ENCODE measurements at regions of chr6 and their contacts with region 1.

Region 1: DNA sequence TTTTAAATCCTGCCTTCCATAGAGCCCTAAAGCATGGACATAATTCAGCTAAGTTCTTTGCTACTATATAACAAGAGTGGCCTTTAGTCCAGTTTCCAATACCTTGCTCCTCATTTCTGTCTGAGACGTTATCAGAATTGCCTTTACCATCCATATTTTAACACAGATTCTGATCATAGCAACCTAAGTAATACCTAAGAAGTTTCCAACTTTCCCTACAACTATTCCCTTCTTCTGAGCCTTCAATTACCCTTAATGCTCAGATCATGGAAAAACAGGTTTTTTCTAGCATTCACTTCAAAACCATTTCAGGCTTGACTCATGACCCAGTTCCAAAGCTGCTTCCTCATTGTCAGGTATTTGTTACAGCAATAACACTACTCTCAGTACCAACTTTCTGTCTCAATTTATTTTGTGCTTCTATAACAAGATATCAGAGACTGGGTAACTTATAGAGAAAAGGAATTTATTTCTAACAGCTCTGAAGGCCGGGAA is 367.1 kb downstream of the C6orf118 start:
- DNase-seq: no peak
- H3K4me3 ChIP-seq: no peak overlapping the region
- H3K27ac ChIP-seq: no peak overlapping the region
- H3K27me3 ChIP-seq: no peaks in the 10 kb centered on the region
- CTCF ChIP-seq: no peak

Region 2: DNA sequence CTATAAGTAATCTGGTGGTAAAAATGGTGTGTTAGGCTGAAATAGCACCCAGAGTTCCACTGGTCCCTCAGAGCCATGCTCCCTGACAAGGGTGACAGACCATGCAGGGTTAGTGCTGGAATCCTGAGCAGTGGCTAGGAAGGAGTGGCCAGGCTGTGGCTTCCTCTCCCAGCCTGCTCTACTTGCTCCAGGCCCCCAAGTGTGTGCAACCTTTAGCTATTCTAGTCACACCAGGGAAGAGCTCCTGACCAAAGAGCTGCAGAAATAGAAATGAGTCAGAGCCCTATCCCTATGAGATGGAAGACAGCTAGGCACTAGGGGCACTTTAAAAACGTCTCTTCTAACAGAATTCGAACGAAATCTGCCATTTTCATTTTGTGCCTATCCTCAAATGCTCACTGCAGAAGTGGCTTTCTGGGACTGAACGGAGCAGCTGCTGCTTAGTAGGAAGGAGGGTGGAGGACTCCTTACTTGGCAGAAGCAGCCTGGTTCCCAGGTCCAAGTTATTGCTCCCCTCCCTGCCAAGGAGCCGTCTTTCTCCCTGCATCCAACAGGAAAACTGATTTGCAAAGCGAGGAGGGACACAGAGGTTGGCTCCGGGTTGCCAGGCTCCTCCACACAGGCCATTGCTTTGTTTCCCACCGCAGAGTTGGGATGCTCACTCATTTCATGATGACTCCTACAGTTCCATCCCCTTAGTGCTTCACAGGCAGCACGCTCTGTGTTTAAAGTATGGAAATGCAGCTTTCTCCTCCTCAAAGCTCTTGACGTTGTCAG is 387.4 kb before region 1 on chr6:
- intact Hi-C with region 1: loop called in 1 of 2 experiments (anchors 5 kb)
- DNase-seq: peak in 7 of 10 donors; percentile 4 to 52 (median 43)
- H3K4me3 ChIP-seq: peak overlapping the region in 38 of 59 donors; percentile 6 to 51 (median 30)
- H3K27ac ChIP-seq: peak overlapping the region in 54 of 59 donors; percentile 5 to 87 (median 66)
- H3K27me3 ChIP-seq: no peaks in the 10 kb centered on the region
- CTCF ChIP-seq: no peak

Region 3: DNA sequence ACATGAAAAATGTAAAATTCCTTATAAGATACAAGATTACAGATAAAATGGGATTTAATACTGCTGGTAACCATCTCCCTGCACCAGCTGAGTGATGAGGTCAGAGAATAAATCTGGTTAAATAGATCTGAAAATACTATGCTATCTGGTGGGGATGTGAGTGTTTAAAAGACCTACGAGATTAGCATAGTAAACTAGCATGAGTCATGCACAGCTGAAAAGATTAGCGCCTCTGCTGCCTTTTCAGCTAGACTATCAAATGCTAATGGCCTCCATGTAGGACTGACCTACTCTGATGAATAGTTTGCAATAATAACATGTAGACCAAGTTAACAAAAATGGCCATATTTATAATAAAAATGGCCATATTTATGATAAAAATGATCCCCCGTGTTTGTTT is 186.2 kb before region 1 on chr6:
- intact Hi-C with region 1: no loop called
- DNase-seq: no peak
- H3K4me3 ChIP-seq: no peak overlapping the region
- H3K27ac ChIP-seq: peak overlapping the region in 1 of 59 donors; percentile 2
- H3K27me3 ChIP-seq: no peaks in the 10 kb centered on the region
- CTCF ChIP-seq: no peak

Measured in dorsolateral prefrontal cortex (tissue), 120 donors.